AG04450 (cell line): ENCODE measurements at regions of chr17 and their contacts with region 1.

Region 1: GRCh38 chr17:58631523-58632323 is 60.1 kb downstream of the TEX14 start:
- DNase-seq: peak; percentile 99
- H3K4me3 ChIP-seq: peak overlapping the region; percentile 44
- H3K27ac ChIP-seq: peak overlapping the region; percentile 76
- H3K27me3 ChIP-seq: no peaks in the 10 kb centered on the region
- CTCF ChIP-seq: peak; percentile 45; the same call in 1 of the 2 replicates

Region 2: DNA sequence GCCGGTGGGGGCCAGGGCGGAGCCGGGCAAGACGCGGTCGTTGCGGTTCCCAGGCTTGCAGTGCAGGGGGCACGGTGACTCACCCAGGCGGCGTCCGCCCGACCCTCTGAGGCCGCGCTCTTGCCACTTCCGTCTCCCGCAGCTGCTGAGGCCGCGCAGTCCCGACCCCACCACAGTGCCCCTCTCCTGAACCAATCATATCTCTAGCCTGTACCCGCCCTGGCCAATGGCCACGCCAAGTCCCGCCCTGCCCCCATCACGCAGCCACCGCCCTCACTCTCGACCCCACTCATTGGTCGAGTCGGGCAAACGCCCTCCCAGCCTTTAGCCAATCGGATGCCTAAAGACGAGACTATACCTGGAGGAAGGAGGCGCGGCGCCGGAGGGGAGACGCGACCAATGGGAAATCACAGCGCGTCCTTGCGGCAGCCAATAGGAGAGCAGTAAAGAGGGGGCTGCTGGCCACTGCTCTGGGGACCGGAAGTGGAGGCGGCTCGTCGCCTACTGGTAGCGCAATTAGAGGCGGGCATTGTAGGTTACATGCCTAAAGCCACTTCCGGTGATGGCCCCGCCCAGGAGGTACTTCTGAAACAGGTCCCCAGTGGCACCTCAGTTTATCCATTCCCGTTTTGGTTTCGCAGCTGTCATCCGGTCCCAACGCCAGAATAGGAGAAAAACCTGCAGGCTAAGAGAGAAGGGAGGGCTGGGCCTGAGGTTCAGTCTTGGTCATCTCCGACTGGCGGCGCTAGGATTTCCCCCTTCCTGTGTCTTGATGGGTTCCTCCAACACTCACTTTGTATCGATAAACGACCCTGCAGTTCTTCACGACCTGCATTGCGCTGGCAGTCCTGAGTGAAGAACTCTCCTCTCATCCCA is 113.8 kb before region 1 on chr17:
- CTCF ChIA-PET with region 1: interaction called, 15 read pairs
- POLR2A ChIA-PET with region 1: interaction called, 59 read pairs
- DNase-seq: peak; percentile 99
- H3K4me3 ChIP-seq: peak overlapping the region; percentile 83
- H3K27ac ChIP-seq: peak overlapping the region; percentile 91
- H3K27me3 ChIP-seq: no peaks in the 10 kb centered on the region
- CTCF ChIP-seq: no peak

Region 3: GRCh38 chr17:58587702-58588254 is 43.9 kb before region 1 on chr17:
- CTCF ChIA-PET with region 1: interaction called, 14 read pairs
- POLR2A ChIA-PET with region 1: interaction called, 11 read pairs
- DNase-seq: no peak
- H3K4me3 ChIP-seq: no peak overlapping the region
- H3K27ac ChIP-seq: no peak overlapping the region
- H3K27me3 ChIP-seq: no peaks in the 10 kb centered on the region
- CTCF ChIP-seq: peak; percentile 98

Region 4: DNA sequence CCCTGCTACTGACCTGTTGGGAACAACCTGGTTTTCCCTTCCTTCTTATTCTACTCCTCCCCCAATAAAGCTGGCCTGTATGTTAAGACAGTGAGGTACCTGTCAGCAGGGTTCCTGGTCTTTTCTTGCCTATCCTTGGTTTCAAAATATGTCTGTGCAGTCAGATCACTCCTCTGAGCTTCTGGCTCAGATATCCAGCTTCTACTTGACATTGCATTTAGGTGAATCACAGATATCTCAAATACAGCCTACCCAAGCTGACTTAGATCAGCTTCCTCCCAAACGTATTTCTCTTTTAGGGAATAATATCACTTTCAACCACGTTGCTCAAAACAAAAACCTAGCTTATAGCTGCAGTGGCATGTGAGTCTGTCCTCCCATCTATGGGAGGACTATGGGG is 11.4 kb after region 1 on chr17:
- CTCF ChIA-PET with region 1: interaction called, 10 read pairs
- POLR2A ChIA-PET with region 1: interaction called, 41 read pairs
- DNase-seq: peak; percentile 42
- H3K4me3 ChIP-seq: no peak overlapping the region
- H3K27ac ChIP-seq: peak overlapping the region; percentile 3
- H3K27me3 ChIP-seq: peaks cover 2% of the 10 kb centered on the region
- CTCF ChIP-seq: no peak

Region 5: DNA sequence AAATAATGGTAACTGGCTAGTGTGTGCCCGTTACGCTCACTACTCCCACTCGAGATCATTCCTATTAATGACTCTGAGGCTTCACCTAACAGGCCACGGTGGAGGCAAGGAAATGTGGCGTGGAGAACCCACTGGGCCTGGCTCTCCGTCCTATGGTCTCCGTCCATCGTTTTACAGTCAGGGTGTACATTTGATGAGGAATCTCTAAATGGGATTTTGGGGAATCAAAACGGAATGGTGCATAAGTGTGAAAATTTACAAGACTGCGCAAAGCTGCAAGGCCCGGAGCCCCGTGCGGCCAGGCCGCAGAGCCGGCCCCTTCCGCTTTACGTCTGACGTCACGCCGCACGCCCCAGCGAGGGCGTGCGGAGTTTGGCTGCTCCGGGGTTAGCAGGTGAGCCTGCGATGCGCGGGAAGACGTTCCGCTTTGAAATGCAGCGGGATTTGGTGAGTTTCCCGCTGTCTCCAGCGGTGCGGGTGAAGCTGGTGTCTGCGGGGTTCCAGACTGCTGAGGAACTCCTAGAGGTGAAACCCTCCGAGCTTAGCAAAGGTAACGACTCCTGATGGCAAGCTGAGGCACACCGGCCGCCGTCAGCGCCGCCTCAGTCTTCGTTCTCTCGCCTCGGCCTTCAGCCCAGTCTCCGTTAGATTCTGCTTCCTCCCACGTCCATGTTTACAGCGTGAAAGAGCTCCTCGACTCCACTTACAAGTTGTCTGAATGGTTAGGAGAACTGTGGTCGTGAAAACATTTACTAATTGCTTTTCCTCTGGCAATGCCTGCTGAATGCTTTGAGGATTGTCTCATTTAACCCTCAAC is 60.7 kb after region 1 on chr17 and contains the start of gene RAD51C:
- CTCF ChIA-PET with region 1: no interaction called
- POLR2A ChIA-PET with region 1: interaction called, 20 read pairs
- DNase-seq: peak; percentile 56
- H3K4me3 ChIP-seq: peak within 1 kb of the TSS; percentile 83
- H3K27ac ChIP-seq: peak within 1 kb of the TSS; percentile 88
- H3K27me3 ChIP-seq: no peaks in the 10 kb centered on the region
- CTCF ChIP-seq: no peak
- polyA plus RNA-seq, gene RAD51C: 27.5 and 36.1 TPM in 2 replicates